ENCODE measurements at regions of chr18 and their contacts with region 1.

Region 1: GRCh38 chr18:42114310-42114943 is 159.4 kb downstream of the PIK3C3 start:
- DNase-seq: peak; percentile 56
- H3K4me3 ChIP-seq: no peak overlapping the region
- H3K27ac ChIP-seq: no peak overlapping the region
- H3K27me3 ChIP-seq: no peaks in the 10 kb centered on the region
- CTCF ChIP-seq: peak; percentile 92

Region 2: GRCh38 chr18:42005782-42006181 is 108.6 kb before region 1 on chr18:
- CTCF ChIA-PET with region 1: no interaction called
- POLR2A ChIA-PET with region 1: no interaction called
- DNase-seq: no peak
- H3K4me3 ChIP-seq: no peak overlapping the region
- H3K27ac ChIP-seq: no peak overlapping the region
- H3K27me3 ChIP-seq: no peaks in the 10 kb centered on the region
- CTCF ChIP-seq: no peak

Region 3: GRCh38 chr18:42028247-42028832 is 86.1 kb before region 1 on chr18:
- CTCF ChIA-PET with region 1: interaction called, 29 read pairs
- POLR2A ChIA-PET with region 1: no interaction called
- DNase-seq: no peak
- H3K4me3 ChIP-seq: no peak overlapping the region
- H3K27ac ChIP-seq: no peak overlapping the region
- H3K27me3 ChIP-seq: no peaks in the 10 kb centered on the region
- CTCF ChIP-seq: peak; percentile 93

Region 4: DNA sequence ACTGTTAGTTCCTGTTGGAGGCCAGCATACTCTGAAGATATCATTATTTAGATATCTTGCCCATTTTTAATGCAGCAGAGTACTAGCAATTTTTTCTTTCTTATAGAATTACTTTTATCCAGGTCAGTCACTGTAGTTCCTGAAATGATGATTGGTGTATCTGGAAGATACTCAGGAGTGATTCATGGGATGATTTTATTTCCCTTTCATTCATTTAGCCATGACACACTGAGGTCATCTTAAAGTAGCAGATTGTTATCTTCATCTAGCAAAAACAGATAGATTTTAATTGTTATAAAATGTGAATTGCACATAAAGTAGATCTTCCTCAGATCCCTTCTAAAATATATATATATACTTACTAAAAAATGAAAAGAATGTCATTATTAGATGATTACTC is 50.3 kb before region 1 on chr18:
- CTCF ChIA-PET with region 1: interaction called, 12 read pairs
- POLR2A ChIA-PET with region 1: no interaction called
- DNase-seq: no peak
- H3K4me3 ChIP-seq: no peak overlapping the region
- H3K27ac ChIP-seq: no peak overlapping the region
- H3K27me3 ChIP-seq: no peaks in the 10 kb centered on the region
- CTCF ChIP-seq: no peak

Region 5: DNA sequence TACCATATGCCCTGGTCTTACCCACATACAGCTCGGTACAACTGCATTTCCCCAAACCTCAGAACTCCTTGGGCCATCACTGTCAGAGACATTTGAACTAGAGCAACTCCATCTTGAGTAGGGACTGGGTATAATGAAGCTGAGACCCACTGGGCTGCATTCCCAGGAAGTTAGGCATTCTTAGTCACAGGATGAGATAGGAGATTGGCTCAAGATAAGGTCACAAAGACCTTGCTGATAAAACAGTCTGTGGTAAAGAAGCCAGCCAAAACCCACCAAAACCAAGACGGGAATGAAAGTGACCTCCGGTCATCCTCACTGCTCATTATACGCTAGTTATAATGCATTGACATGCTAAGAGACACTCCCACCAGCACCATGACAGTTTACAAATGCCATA is 28.1 kb before region 1 on chr18:
- CTCF ChIA-PET with region 1: interaction called, 27 read pairs
- POLR2A ChIA-PET with region 1: no interaction called
- DNase-seq: no peak
- H3K4me3 ChIP-seq: no peak overlapping the region
- H3K27ac ChIP-seq: no peak overlapping the region
- H3K27me3 ChIP-seq: no peaks in the 10 kb centered on the region
- CTCF ChIP-seq: no peak

Region 6: DNA sequence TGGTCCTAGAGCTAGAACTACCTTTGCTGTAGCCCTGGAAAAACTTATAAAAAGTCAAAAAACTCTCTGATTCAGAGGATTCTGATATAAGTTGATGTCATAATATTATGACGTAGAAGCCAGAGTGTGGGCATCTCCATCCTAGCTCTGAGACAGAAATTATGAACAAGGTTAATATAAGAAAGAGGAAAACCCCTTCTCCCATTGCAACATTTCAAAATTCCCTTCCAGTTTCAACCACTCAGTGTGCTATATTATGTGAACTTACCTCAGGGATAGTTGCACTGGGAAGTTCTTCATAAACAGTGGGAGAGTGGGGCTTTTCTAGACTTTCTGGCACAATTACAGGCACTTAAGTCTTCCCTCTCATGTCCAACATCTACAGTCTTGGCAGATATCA is 12.2 kb after region 1 on chr18:
- CTCF ChIA-PET with region 1: interaction called, 46 read pairs
- POLR2A ChIA-PET with region 1: no interaction called
- DNase-seq: no peak
- H3K4me3 ChIP-seq: no peak overlapping the region
- H3K27ac ChIP-seq: no peak overlapping the region
- H3K27me3 ChIP-seq: no peaks in the 10 kb centered on the region
- CTCF ChIP-seq: no peak

Region 7: GRCh38 chr18:42298759-42299675 is 184.6 kb after region 1 on chr18:
- CTCF ChIA-PET with region 1: interaction called, 49 read pairs
- POLR2A ChIA-PET with region 1: no interaction called
- DNase-seq: peak; percentile 33
- H3K4me3 ChIP-seq: no peak overlapping the region
- H3K27ac ChIP-seq: no peak overlapping the region
- H3K27me3 ChIP-seq: no peaks in the 10 kb centered on the region
- CTCF ChIP-seq: peak; percentile 88

Region 8: DNA sequence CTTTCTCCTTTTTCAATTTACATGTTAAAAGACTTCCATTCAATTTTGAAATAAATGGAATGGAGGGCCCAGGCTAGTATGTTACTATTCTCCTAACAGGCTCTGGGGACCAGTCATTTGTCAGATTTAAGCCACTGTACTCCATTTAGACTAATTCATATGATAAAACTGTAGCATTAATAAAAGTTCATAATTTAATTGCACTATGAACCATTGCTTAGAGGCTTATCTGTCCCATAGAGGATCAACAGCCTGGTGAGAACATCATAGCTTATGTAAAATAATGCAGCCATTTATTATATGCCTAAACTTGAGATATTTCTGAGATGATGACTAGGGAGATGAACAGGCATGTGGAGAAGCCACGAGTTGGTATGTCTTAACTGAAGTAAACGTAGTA is 845.1 kb after region 1 on chr18:
- CTCF ChIA-PET with region 1: no interaction called
- POLR2A ChIA-PET with region 1: no interaction called
- DNase-seq: no peak
- H3K4me3 ChIP-seq: no peak overlapping the region
- H3K27ac ChIP-seq: no peak overlapping the region
- H3K27me3 ChIP-seq: no peaks in the 10 kb centered on the region
- CTCF ChIP-seq: no peak

Region 9: GRCh38 chr18:43587538-43588153 is 1473.2 kb after region 1 on chr18:
- CTCF ChIA-PET with region 1: interaction called, 41 read pairs
- POLR2A ChIA-PET with region 1: no interaction called
- DNase-seq: no peak
- H3K4me3 ChIP-seq: no peak overlapping the region
- H3K27ac ChIP-seq: no peak overlapping the region
- H3K27me3 ChIP-seq: no peaks in the 10 kb centered on the region
- CTCF ChIP-seq: peak; percentile 75

Measured in AG04450 (cell line).